ENCODE measurements at regions of chr16 and their contacts with region 1.

Region 1: GRCh38 chr16:66934153-66934838 is at the start of gene CIAO2B:
- DNase-seq: peak; percentile 94
- ATAC-seq: peak; percentile 86
- H3K4me3 ChIP-seq: peak within 1 kb of the TSS; percentile 89 to 94 (median 92)
- H3K4me3 Mint-ChIP-seq: peak within 1 kb of the TSS; percentile 99
- H3K27ac ChIP-seq: peak within 1 kb of the TSS; percentile 86 to 92
- H3K27ac Mint-ChIP-seq: peak within 1 kb of the TSS; percentile 98
- H3K4me1 ChIP-seq: peaks cover 24 to 33% of the 10 kb centered on the region in 2 donors
- H3K4me1 Mint-ChIP-seq: peaks cover 54% of the 10 kb centered on the region
- H3K27me3 ChIP-seq: no peaks in the 10 kb centered on the region
- H3K27me3 Mint-ChIP-seq: no peaks in the 10 kb centered on the region
- CTCF ChIP-seq: no peak
- total RNA-seq, gene CIAO2B: 55.4 and 60.6 TPM in 2 replicates

Region 2: DNA sequence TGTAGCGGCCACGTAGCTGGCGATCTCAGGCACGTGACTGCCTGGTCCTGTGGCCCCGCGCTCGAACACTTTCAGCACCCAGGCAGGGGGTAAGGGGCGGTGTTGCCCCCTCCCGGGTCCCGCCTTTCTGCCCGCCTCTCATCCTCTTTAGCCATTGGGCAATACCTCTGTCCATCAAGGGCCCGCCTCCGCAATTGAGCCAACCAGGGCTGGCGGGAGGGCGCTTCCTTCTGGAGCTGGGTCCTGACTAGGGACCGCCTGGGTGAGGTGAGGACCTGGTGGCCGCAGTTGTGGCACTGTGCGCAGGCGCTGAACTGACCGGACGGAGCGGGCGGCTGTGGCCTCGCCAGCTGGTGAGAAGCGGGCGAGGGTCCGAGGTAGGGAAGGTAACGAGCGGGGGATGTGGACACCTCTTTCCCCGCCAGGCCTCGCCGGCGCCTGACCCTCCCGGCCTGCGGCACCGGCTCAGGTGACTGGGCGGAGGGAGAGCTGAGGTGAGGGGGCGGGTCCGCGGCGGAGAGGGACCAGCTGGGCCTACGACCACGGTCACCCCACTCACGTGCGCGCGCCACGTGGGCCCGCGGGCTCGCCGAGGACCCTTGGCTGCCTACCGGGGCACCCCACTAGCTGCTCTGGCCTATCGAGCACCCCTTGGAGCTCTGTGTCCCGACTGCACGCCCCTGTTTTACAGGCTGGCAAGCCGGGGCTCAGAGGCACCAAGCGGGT is 53.8 kb before region 1 on chr16 and contains the start of gene PDP2:
- CTCF ChIA-PET with region 1: no interaction called
- POLR2A ChIA-PET with region 1: no interaction called
- intact Hi-C with region 1: loop called (anchors 5 kb)
- DNase-seq: peak; percentile 94
- ATAC-seq: peak; percentile 99
- H3K4me3 ChIP-seq: peak within 1 kb of the TSS; percentile 25 to 91 (median 85)
- H3K4me3 Mint-ChIP-seq: peak within 1 kb of the TSS; percentile 98
- H3K27ac ChIP-seq: peak within 1 kb of the TSS; percentile 6 to 46
- H3K27ac Mint-ChIP-seq: peak within 1 kb of the TSS; percentile 92
- H3K4me1 ChIP-seq: peaks cover 4 to 16% of the 10 kb centered on the region in 2 donors
- H3K4me1 Mint-ChIP-seq: peaks cover 17% of the 10 kb centered on the region
- H3K27me3 ChIP-seq: no peaks in the 10 kb centered on the region
- H3K27me3 Mint-ChIP-seq: no peaks in the 10 kb centered on the region
- CTCF ChIP-seq: no peak
- total RNA-seq, gene PDP2: 15.0 and 18.7 TPM in 2 replicates

Region 3: DNA sequence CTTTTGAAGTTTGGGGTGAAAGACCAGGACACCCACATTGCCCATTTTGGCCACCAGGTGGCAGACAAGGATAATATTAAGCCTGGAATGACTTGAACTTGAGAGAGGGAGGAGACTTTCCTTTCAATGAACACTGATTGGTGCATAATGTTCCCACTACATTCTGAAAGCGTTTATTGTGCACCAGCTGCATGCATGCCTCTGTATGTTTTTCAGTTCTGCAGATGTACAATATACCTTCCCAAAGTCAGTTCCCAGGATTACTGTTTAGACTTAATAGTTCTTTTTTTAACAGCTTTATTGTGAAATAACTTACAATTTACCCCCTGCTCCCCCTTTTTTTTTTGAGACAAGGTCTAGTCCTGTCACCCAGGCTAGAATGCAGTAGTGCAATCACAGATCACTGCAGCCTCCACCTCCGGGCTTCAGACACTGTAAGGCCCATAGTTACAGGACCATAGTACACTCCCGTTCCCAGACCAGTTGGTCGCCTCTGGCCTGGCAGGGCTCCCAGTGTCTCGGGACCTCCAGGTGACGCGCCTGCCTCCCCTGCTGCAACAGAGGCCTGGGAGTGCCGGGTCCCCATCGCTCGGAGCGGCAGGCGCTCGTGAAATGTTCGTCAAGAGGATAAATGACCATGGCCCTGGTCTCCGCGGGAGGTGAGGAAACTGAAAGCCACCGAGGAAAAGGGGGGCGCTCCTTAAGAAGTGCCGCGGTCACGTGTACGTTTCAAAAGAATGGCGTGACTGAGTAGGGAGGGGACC is 13.2 kb after region 1 on chr16:
- CTCF ChIA-PET with region 1: interaction called, 3 read pairs
- POLR2A ChIA-PET with region 1: no interaction called
- intact Hi-C with region 1: loop called (anchors 1 kb)
- DNase-seq: peak; percentile 86
- ATAC-seq: peak; percentile 90
- H3K4me3 ChIP-seq: peak overlapping the region; percentile 26 to 60 (median 49)
- H3K4me3 Mint-ChIP-seq: peak overlapping the region; percentile 93
- H3K27ac ChIP-seq: no peak overlapping the region
- H3K27ac Mint-ChIP-seq: no peak overlapping the region
- H3K4me1 ChIP-seq: peaks cover 15 to 23% of the 10 kb centered on the region in 2 donors
- H3K4me1 Mint-ChIP-seq: peaks cover 18% of the 10 kb centered on the region
- H3K27me3 ChIP-seq: peaks cover 0 to 35% (median 20%) of the 10 kb centered on the region in 4 experiments
- H3K27me3 Mint-ChIP-seq: peaks cover 40% of the 10 kb centered on the region
- CTCF ChIP-seq: peak; percentile 96

Region 4: DNA sequence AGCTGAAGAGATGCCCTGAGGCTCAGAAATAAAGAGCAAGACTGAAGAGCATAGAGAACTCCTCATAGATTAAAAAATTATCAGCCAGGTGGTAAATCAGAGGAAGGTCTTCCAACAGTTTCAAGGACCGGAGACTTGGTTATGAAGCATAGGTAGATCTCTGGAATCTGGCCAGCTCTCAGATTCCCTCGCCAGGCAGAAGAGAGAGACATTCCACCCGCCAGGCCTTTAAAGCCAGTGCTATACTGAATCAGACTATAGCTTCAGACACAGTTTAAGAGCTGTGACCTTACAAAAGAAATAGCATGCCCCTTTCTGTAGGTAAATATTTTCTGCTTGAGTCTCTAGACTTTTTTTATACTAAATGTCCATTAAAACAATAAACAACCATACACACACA is 1221.1 kb after region 1 on chr16:
- CTCF ChIA-PET with region 1: no interaction called
- POLR2A ChIA-PET with region 1: no interaction called
- intact Hi-C with region 1: no loop called
- DNase-seq: no peak
- ATAC-seq: no peak
- H3K4me3 ChIP-seq: no peak overlapping the region
- H3K4me3 Mint-ChIP-seq: no peak overlapping the region
- H3K27ac ChIP-seq: no peak overlapping the region
- H3K27ac Mint-ChIP-seq: no peak overlapping the region
- H3K4me1 ChIP-seq: no peaks in the 10 kb centered on the region
- H3K4me1 Mint-ChIP-seq: peaks cover 6% of the 10 kb centered on the region
- H3K27me3 ChIP-seq: no peaks in the 10 kb centered on the region
- H3K27me3 Mint-ChIP-seq: no peaks in the 10 kb centered on the region
- CTCF ChIP-seq: no peak